ENCODE measurements at regions of chr19 and their contacts with region 1.

Region 1: DNA sequence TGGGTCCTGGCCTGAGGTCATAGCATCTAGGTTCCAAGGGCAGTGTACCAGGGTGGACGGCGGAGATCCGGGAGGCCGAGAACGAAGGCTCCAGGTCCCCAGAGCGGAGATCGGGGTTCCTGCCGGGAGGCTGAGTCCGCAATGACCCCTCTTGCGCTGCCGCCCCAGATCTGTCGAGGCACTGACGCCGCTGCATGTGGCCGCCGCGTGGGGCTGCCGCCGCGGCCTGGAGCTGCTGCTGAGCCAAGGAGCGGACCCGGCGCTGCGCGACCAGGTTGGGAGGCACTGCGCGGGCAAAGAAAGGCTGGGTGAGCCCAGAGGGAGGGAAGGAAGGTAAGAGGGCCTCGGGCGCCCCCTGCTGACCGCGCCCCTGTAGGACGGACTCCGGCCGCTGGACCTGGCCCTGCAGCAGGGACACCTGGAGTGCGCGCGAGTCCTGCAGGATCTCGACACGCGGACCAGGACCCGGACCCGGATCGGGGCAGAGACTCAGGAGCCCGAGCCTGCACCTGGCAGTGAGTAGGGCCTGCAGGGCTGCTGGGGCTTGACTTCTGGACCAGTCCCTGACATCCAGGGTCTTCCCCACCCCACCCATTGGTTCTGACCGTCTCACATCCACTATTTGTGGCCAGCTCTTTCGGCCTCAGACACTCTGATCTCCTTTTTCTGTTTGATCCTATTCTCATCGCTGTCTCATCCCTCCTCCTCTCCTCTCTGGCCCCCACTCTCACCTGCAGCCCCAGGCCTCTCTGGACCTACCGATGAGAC is 971 bp downstream of the ANKLE1 start:
- DNase-seq: peak; percentile 69
- ATAC-seq: peak; percentile 96
- H3K4me3 ChIP-seq: peak overlapping the region in 1 of 3 experiments; percentile 57; a peak in 2 of 6 replicates
- H3K27ac ChIP-seq: no peak overlapping the region
- H3K4me1 ChIP-seq: 0 out of 2 replicates have a peak, but pooled peaks cover 6% of the 10 kb centered on the region
- H3K27me3 ChIP-seq: no peaks in the 10 kb centered on the region
- CTCF ChIP-seq: peak; percentile 99
- EP300 ChIP-seq: no peak
- POLR2A ChIP-seq: no peak
- RAD21 ChIP-seq: peak; percentile 98

Region 2: DNA sequence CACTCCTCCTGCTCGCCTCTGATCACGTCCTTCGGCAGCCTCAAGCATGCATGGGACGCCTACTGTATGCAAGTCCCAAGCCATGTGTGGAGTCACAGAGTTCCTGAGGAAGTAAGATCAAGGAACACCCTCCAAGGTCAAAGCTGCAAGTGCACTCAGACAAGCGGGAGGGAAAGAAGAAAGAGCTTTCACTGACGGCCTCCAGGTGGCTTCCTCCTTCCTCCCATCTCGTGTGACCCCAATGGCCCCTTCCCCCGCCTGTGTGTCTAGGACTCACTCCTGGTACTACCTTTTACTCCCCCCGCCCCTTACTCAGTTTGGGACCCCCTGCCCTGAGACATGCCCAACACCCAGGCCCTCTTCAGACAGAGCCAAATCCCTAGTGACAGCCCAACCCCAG is 213.5 kb before region 1 on chr19:
- CTCF ChIA-PET with region 1: interaction called, 16 read pairs
- POLR2A ChIA-PET with region 1: no interaction called
- in situ Hi-C with region 1: loop called (anchors 5 kb)
- intact Hi-C with region 1: loop called (anchors 5 kb)
- DNase-seq: no peak
- ATAC-seq: no peak
- H3K4me3 ChIP-seq: no peak overlapping the region
- H3K27ac ChIP-seq: no peak overlapping the region
- H3K4me1 ChIP-seq: peaks cover 26% of the 10 kb centered on the region
- H3K27me3 ChIP-seq: no peaks in the 10 kb centered on the region
- CTCF ChIP-seq: no peak
- EP300 ChIP-seq: no peak
- POLR2A ChIP-seq: no peak
- RAD21 ChIP-seq: no peak

Region 3: DNA sequence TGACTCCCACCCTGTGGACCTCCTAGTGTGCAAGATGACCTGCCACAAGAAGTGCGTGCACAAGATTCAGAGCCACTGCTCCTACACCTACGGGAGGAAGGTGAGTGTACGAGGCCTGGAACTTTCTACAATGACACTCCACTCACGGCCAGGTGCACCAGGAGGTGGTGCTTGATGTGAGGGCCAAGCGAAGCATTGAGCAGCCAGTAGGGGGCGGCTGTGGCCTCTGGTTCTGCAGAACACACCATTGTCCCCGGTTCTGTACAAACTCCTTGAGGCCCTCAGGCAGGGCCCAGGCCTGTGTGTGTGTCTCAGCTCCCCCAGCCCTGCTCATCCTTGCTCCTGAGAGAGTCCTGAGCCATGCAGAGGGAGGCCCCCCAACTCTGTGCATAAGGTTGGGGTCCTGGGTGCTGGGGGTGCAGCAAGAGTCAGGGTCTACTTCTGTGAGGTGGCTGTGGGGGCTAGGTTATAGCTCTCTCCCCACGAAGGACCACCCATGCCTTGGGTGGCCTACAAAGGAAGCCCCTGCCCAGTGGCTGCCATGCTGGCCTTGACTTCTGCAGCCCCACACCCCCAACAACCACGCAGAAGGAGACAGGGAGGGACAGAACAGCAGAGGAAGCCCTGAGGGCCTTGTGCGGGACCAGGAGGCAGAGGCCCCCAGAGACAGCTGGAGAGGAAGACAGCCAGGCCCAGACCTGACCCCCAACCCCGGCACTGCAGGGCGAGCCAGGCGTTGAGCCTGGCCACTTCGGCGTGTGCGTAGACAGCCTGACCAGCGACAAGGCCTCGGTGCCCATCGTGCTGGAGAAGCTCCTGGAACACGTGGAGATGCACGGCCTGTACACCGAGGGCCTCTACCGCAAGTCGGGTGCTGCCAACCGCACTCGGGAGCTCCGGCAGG is 77.2 kb before region 1 on chr19:
- CTCF ChIA-PET with region 1: interaction called, 17 read pairs
- POLR2A ChIA-PET with region 1: no interaction called
- in situ Hi-C with region 1: loop called (anchors 5 kb)
- intact Hi-C with region 1: loop called (anchors 1 kb)
- DNase-seq: peak; percentile 55
- ATAC-seq: peak; percentile 75
- H3K4me3 ChIP-seq: no peak overlapping the region
- H3K27ac ChIP-seq: no peak overlapping the region
- H3K4me1 ChIP-seq: peaks cover 12% of the 10 kb centered on the region
- H3K27me3 ChIP-seq: no peaks in the 10 kb centered on the region
- CTCF ChIP-seq: peak; percentile 90
- EP300 ChIP-seq: no peak
- POLR2A ChIP-seq: no peak
- RAD21 ChIP-seq: peak; percentile 86

Region 4: DNA sequence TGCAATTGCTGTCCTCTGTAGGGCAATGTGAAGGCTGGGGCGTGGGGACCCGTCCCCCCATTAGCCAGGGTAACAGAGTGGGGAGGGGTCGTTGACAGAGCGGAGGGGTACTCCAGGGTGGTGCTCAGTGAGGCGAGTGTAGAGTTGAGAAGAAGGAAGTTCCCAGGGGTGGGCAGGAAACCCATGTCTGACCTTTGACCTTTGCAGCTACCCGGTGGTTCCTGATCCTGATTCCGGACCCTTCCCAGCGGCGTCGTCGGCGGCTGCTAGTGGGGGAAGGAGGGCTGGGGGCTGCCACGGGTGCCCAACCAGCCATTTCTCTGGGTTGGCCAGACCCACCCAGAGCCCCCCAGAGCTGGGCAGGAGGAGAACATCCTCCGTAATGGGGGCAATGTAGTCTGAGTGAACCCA is 96.6 kb after region 1 on chr19:
- CTCF ChIA-PET with region 1: no interaction called
- POLR2A ChIA-PET with region 1: no interaction called
- in situ Hi-C with region 1: no loop called
- intact Hi-C with region 1: no loop called
- DNase-seq: no peak
- ATAC-seq: no peak; the same call in 1 of the 3 replicates
- H3K4me3 ChIP-seq: peak overlapping the region; percentile 1 to 62 (median 6); a peak in 2 of 6 replicates
- H3K27ac ChIP-seq: no peak overlapping the region
- H3K4me1 ChIP-seq: peaks cover 24% of the 10 kb centered on the region
- H3K27me3 ChIP-seq: peaks cover 0 to 8% of the 10 kb centered on the region in 2 experiments; a peak in 3 of 5 replicates
- CTCF ChIP-seq: no peak
- EP300 ChIP-seq: 0 out of 4 replicates have a peak, but pooled peaks of 1 of the 2 experiments have one; percentile 10
- POLR2A ChIP-seq: no peak
- RAD21 ChIP-seq: no peak